Calu3 (cell line): ENCODE measurements at regions of chr3 and their contacts with region 1.

Region 1: DNA sequence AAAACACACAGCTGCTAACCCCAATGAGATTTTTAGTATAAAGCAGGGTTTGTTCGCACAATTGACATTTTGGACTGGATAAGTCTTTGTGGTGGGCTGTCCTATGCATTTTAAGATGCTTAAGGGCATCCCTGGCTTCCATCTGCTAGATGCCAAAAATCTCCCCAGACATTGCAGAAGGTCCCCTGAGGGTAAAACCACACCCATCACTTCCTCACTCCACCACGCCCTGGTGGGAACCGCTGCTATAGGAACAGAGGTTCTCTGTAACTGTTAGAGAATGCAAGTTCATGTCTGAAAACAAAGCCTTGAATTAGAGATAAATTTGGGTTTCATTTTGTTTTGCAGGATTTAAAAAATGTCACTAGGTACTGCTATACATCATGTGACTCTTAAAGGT is 67.7 kb downstream of the ARHGEF26 start:
- DNase-seq: no peak
- H3K4me3 Mint-ChIP-seq: no peak overlapping the region
- H3K27ac Mint-ChIP-seq: no peak overlapping the region
- H3K4me1 Mint-ChIP-seq: no peaks in the 10 kb centered on the region
- H3K27me3 Mint-ChIP-seq: no peaks in the 10 kb centered on the region
- CTCF ChIP-seq: no peak

Region 2: GRCh38 chr3:155047672-155048071 is 858.8 kb after region 1 on chr3:
- CTCF ChIA-PET with region 1: interaction called, 11 read pairs
- intact Hi-C with region 1: no loop called
- DNase-seq: no peak
- H3K4me3 Mint-ChIP-seq: no peak overlapping the region
- H3K27ac Mint-ChIP-seq: no peak overlapping the region
- H3K4me1 Mint-ChIP-seq: no peaks in the 10 kb centered on the region
- H3K27me3 Mint-ChIP-seq: no peaks in the 10 kb centered on the region
- CTCF ChIP-seq: no peak